ENCODE measurements at regions of chr1 and their contacts with region 1.

Region 1: GRCh38 chr1:45508295-45509151 is 8.4 kb downstream of the MMACHC start:
- DNase-seq: no peak
- H3K4me3 ChIP-seq: no peak overlapping the region
- H3K27ac ChIP-seq: no peak overlapping the region
- H3K4me1 ChIP-seq: no peaks in the 10 kb centered on the region
- H3K27me3 ChIP-seq: no peaks in the 10 kb centered on the region
- CTCF ChIP-seq: peak in 1 of 3 donors; percentile 26
- POLR2A ChIP-seq: no peak

Region 2: DNA sequence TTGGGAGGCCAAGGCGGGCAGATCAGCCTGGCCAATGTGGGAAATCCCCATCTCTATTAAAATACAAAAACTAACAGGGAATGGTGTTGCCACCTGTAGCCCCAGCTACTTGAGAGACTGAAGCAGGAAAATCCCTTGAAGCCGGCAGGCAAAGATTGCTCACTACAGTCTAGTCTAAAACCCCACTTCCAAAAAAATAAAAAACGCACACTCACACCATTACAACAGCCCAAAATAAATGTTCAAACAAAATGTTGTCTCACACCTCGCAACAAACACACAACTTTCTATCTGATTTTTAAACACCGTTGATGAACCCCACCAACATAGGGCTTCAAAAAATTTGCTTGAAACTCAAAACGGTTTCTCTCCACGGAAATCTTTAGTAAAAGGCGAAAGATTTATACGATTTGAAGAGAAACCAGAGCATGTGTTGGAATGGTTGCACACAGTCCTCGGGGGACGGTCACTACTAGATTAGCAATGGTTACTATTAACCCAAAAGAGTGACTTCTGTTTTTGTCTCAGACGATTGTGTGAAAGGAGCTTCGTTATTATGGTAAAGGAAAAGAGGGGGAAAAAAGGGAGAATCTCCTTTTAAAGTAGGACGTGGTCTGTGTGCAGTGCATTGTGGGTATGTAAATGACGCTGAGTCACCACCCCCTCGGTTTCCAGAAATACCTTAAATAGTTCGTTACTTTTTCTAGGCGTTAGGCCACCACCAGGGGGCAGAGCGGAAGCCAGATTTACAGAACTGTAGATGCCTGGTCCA is 777.6 kb before region 1 on chr1 and contains the start of gene RNU5D-1:
- intact Hi-C with region 1: no loop called
- DNase-seq: peak; percentile 92 to 93
- H3K4me3 ChIP-seq: peak within 1 kb of the TSS in 2 of 3 donors; percentile 25 to 46
- H3K27ac ChIP-seq: peak within 1 kb of the TSS; percentile 87 to 91
- H3K4me1 ChIP-seq: no peaks in the 10 kb centered on the region
- H3K27me3 ChIP-seq: no peaks in the 10 kb centered on the region
- CTCF ChIP-seq: peak; percentile 78 to 92 (median 89)
- POLR2A ChIP-seq: peak; percentile 95
- total RNA-seq, gene RNU5D-1: not detected

Region 3: DNA sequence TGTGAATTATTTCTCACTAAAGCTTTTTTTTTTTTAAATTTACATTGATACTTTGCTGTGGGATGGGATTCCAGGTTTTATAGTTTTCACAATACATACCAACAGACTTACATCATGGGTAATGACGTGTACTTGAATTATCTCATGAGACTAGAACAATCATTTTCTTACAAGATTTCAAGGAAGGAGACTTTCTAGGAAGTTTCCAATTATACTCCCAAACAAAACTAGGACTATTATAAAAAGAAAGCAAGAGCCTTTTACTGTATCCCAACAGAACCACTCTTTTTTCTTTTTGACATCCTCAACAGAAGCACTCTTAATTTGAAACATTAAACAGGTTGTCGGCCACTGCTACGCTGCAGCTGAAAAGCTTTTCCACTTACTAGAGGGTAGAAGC is 66.3 kb before region 1 on chr1:
- intact Hi-C with region 1: no loop called
- DNase-seq: no peak
- H3K4me3 ChIP-seq: no peak overlapping the region
- H3K27ac ChIP-seq: no peak overlapping the region
- H3K4me1 ChIP-seq: no peaks in the 10 kb centered on the region
- H3K27me3 ChIP-seq: no peaks in the 10 kb centered on the region
- CTCF ChIP-seq: no peak
- POLR2A ChIP-seq: no peak

Region 4: DNA sequence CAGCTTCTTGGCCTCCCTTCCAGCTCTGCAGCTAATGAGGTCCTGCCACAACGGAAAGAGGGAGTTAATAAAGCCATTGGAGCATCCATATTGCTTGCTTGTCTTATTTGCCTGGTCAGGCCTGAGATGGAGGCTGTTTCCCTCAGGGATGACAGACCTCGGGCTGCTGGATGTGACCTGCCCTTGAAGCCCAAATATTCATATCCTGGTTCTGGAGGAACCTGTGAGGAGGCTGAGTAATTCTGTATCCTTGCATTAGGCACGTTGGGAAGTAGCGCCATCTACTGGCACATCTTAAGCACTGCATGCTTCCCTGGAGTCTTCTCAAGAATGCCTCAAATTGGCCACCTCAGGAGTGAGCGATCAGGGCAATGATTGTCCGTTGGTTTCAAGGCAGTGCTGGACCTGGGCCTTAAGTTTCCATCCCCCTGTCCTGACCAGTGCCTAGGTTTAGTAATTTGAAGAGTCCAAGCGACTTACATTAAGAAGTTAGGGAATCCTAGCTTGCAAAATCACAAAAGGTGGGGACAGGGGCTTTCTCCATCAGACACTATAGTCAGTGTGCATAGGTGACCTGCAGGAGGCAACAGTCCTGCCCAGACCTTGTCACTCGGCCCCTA is 61.5 kb after region 1 on chr1:
- intact Hi-C with region 1: loop called (anchors 10 kb)
- DNase-seq: peak; percentile 70
- H3K4me3 ChIP-seq: no peak overlapping the region
- H3K27ac ChIP-seq: peak overlapping the region in 1 of 2 donors; percentile 62
- H3K4me1 ChIP-seq: no peaks in the 10 kb centered on the region
- H3K27me3 ChIP-seq: no peaks in the 10 kb centered on the region
- CTCF ChIP-seq: peak; percentile 89 to 96 (median 94)
- POLR2A ChIP-seq: no peak

Region 5: GRCh38 chr1:45654540-45655280 is 146.2 kb after region 1 on chr1:
- intact Hi-C with region 1: no loop called
- DNase-seq: no peak
- H3K4me3 ChIP-seq: no peak overlapping the region
- H3K27ac ChIP-seq: no peak overlapping the region
- H3K4me1 ChIP-seq: no peaks in the 10 kb centered on the region
- H3K27me3 ChIP-seq: no peaks in the 10 kb centered on the region
- CTCF ChIP-seq: no peak
- POLR2A ChIP-seq: no peak